Activated CD4-positive, alpha-beta memory T cell treated with anti-CD3 and anti-CD28 coated beads, Interleukin-2, amount 10 ng/mL, durations not matched to agents 7 days and 5 days (primary cell): ENCODE measurements at regions of chr9 and their contacts with region 1.

Region 1: DNA sequence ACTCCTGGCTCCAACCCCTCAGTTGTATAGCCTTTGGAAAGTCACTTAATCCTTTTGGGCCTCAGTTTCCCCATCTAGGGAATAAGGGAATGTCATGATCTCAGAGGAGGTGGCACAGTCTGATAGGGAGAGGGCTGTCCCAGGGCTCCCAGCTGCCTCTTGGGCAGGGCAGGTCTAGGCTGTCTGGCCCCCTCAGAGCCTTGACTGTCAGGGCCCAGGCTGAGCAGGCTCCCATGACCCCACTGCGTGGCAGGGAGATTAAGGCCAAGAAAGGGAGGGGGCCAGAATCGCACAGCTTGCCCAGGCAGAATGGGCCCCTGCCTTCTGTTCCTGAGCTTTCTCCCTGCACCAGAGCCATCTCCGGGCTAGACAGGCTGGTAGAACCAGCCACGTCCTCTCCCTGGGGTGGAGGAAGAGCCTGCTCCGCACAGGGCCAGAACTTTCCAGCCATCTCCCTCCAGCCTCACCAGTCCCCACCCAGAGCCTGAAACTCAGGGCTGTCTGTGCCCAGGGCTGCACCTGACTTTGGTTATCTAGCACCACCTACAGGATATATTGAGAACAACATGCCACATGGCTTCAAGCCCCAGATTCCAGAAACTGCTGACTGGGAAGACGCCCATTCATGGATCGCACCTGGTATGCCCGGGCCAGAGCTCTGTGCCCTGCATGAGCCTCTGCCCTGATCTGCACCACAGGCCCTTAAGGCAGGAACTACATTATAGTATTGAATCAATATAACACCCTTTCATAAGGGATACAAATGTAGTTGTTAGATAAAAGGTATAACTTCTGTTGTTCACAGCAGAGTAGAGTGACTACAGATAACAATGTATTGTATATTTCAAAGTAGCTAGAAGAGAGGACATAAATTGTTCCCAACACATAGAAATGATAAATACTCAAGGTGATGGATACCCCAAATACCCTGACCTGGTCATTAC is 32.0 kb downstream of the NAIF1 start:
- DNase-seq: peak; percentile 72
- H3K4me3 Mint-ChIP-seq: no peak overlapping the region
- H3K27ac Mint-ChIP-seq: peak overlapping the region; percentile 25
- H3K4me1 Mint-ChIP-seq: peaks cover 44% of the 10 kb centered on the region
- H3K27me3 Mint-ChIP-seq: peaks cover 2% of the 10 kb centered on the region

Region 2: DNA sequence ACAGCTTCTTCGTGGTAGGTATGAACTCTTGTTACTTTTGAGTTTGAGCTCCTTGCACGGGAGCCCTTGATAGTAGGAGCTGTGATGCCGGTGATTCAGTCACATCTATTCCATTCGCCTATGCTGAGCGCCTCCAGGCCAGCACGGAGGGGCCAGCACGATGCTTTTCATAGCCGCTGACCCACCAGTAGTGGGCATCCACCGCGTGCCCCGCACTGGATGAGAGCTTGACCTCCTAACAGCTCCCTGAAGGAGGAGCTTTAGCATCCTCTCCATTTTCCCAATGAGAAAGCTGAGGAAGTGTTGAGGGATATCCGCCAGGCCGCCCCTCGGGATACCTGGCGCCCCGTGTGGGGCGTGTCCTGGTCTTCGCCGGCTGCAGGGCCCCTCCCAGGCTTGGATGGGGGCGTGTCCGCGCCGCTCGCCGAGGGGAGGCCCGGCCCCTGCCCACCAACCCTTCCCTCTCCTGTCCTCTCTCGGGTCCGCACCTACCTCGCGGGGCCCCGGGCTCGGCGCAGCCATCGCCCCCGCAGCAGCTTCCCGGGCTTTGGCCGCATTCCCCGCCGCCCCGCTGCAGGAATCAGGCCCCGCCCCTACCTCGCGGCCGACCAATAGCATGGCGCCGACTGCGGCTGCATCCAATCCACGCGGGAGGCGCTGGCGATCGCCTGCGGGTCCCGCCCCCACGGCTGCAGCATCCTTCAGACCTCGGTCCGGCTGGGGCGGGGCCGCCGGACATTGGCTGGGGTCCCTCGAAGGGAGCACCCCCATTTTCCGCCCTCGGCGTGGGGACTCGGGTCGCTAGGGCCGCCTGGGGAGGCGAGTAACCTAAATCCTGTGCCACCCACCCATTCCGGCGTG is 104.6 kb before region 1 on chr9 and contains the start of gene PIP5KL1:
- CTCF ChIA-PET with region 1: interaction called, 11 read pairs
- POLR2A ChIA-PET with region 1: interaction called, 5 read pairs
- DNase-seq: peak; percentile 78
- H3K4me3 Mint-ChIP-seq: peak within 1 kb of the TSS; percentile 65
- H3K27ac Mint-ChIP-seq: no peak within 1 kb of the TSS
- H3K4me1 Mint-ChIP-seq: peaks cover 61% of the 10 kb centered on the region
- H3K27me3 Mint-ChIP-seq: peaks cover 15% of the 10 kb centered on the region
- total RNA-seq, gene PIP5KL1: 1.5 to 1.9 TPM

Region 3: DNA sequence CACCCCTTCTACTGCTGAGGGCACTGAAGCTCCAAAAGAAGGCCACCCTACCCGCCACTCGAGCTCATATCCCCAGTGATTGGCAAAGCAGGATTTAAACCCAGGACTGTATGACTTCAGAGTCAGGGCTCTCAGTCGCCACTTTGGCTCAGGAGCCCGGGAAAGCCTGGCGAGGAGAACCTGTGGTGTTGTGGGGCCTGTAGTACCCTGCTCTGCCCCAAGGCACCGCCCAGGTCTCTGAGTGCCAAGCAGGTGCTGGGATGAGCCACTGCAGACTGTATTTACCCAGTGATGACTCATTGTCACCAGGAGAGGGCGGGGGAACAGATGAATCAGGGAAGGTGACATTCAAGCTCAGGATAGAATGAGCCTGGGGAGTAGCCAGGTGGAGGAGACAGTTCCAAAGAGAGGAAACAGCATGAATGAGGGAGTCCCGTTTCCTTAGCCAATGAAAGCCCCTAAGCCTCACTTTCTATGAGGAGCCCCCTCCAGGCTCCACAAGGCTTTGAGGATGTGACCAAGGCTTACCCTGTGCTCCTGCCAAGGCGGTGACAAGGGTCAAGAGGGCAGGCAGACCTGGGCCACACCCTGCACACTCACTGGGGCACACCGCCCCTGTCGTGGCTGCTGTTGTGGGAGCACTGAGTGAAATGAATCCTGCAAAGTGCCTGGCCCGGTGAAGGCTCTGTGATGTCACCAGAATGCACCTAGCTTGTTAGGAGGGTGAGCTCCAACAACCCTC is 79.6 kb before region 1 on chr9:
- CTCF ChIA-PET with region 1: interaction called, 112 read pairs
- POLR2A ChIA-PET with region 1: interaction called, 52 read pairs
- DNase-seq: peak; percentile 81
- H3K4me3 Mint-ChIP-seq: peak overlapping the region; percentile 31
- H3K27ac Mint-ChIP-seq: peak overlapping the region; percentile 66
- H3K4me1 Mint-ChIP-seq: peaks cover 72% of the 10 kb centered on the region
- H3K27me3 Mint-ChIP-seq: no peaks in the 10 kb centered on the region

Region 4: DNA sequence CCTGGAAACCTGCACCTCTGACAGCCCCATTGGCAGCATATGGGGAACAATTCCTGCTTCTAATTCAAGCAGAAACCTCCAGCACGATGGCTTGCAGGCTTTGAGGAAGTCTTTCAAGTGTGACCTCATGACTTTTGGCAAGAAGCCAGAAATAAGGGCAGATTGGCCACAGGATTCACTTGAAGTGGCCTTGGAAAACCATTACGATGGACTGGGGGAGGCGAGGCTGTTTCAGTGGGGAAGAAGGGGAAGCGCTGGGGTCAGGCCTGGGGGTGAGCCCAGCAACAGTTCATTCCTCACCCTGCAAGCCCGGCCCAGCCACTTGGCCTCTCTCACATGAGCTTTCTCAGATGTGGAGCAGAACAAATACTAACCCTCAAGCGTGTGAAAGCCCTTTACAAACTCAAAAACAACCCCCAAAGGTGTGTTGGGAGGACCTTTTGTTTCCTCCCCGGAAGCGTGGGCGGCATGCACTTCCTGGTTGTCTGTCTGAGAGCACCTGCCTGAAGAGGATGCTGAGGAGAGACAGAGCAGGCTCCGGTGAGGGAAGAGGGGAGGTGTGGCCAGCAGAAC is 27.4 kb before region 1 on chr9:
- CTCF ChIA-PET with region 1: interaction called, 7 read pairs
- POLR2A ChIA-PET with region 1: interaction called, 13 read pairs
- DNase-seq: peak; percentile 82
- H3K4me3 Mint-ChIP-seq: peak overlapping the region; percentile 61
- H3K27ac Mint-ChIP-seq: peak overlapping the region; percentile 89
- H3K4me1 Mint-ChIP-seq: peaks cover 43% of the 10 kb centered on the region
- H3K27me3 Mint-ChIP-seq: peaks cover 2% of the 10 kb centered on the region

Region 5: DNA sequence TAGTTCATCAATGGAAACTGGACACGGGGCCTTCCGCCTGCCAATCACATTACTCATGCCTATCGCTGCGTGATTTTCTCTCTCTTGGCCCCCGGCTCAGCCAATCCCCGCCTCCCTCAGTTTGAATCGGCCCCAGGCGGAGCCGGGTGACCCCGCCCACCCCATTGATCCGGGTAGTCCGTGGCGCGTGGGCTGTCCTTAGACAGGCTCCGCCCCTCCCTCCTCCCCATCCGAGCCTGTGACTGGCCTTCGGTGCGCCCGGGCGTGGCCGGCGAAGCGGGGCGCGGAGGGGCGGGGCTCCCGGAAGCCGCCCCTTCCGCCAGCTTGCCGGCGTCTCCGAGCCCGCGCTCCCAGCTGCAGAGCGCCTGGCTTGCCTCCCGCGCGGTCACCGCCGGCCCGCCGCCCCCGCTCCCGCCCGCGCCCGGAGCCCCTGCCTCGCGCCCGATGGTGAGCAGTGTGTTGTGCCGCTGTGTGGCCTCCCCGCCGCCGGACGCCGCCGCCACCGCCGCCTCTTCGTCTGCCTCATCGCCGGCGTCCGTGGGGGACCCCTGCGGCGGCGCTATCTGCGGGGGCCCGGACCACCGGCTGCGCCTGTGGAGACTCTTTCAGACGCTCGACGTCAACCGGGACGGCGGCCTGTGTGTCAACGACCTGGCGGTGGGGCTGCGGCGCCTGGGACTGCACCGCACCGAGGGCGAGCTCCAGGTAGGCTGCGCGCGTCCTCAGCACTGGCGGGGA is 33.0 kb after region 1 on chr9 and contains the start of gene SLC25A25:
- CTCF ChIA-PET with region 1: interaction called, 12 read pairs
- POLR2A ChIA-PET with region 1: interaction called, 15 read pairs
- DNase-seq: peak; percentile 100
- H3K4me3 Mint-ChIP-seq: peak within 1 kb of the TSS; percentile 97
- H3K27ac Mint-ChIP-seq: peak within 1 kb of the TSS; percentile 86
- H3K4me1 Mint-ChIP-seq: peaks cover 55% of the 10 kb centered on the region
- H3K27me3 Mint-ChIP-seq: no peaks in the 10 kb centered on the region
- total RNA-seq, gene SLC25A25: 21.3 to 22.2 TPM

Region 6: GRCh38 chr9:128286440-128286839 is 251.3 kb after region 1 on chr9:
- CTCF ChIA-PET with region 1: no interaction called
- POLR2A ChIA-PET with region 1: no interaction called
- DNase-seq: no peak
- H3K4me3 Mint-ChIP-seq: no peak overlapping the region
- H3K27ac Mint-ChIP-seq: no peak overlapping the region
- H3K4me1 Mint-ChIP-seq: no peaks in the 10 kb centered on the region
- H3K27me3 Mint-ChIP-seq: no peaks in the 10 kb centered on the region